ENCODE measurements at regions of chr15 and their contacts with region 1.

Region 1: GRCh38 chr15:82663186-82663600 is 16.0 kb upstream of the CPEB1 start:
- H3K4me3 Mint-ChIP-seq: no peak overlapping the region
- H3K27ac Mint-ChIP-seq: no peak overlapping the region
- H3K4me1 Mint-ChIP-seq: no peaks in the 10 kb centered on the region
- H3K27me3 Mint-ChIP-seq: no peaks in the 10 kb centered on the region

Region 2: GRCh38 chr15:82635798-82636197 is 27.4 kb before region 1 on chr15:
- intact Hi-C with region 1: no loop called
- H3K4me3 Mint-ChIP-seq: no peak overlapping the region
- H3K27ac Mint-ChIP-seq: no peak overlapping the region
- H3K4me1 Mint-ChIP-seq: no peaks in the 10 kb centered on the region
- H3K27me3 Mint-ChIP-seq: peaks cover 32% of the 10 kb centered on the region

Region 3: GRCh38 chr15:82709421-82710207 is 46.4 kb after region 1 on chr15 and contains the start of gene AP3B2:
- intact Hi-C with region 1: loop called (anchors 5 kb)
- H3K4me3 Mint-ChIP-seq: peak within 1 kb of the TSS; percentile 74
- H3K27ac Mint-ChIP-seq: no peak within 1 kb of the TSS
- H3K4me1 Mint-ChIP-seq: no peaks in the 10 kb centered on the region
- H3K27me3 Mint-ChIP-seq: peaks cover 13% of the 10 kb centered on the region

Measured in dendritic cell treated with granulocyte-macrophage colony-stimulating factor and Interleukin-4, amounts not matched to agents 40 ng/mL and 50 ng/mL, for 4 days (primary cell).